ENCODE measurements at regions of chr1 and their contacts with region 1.

Region 1: GRCh38 chr1:45011837-45012638 is at the start of gene UROD:
- DNase-seq: peak; percentile 87 to 95 (median 91)
- H3K4me3 ChIP-seq: peak within 1 kb of the TSS; percentile 86 to 98
- H3K4me3 Mint-ChIP-seq: peak within 1 kb of the TSS; percentile 88 to 98 (median 96)
- H3K27ac ChIP-seq: peak within 1 kb of the TSS; percentile 71
- H3K27ac Mint-ChIP-seq: peak within 1 kb of the TSS; percentile 91 to 99 (median 96)
- H3K4me1 ChIP-seq: peaks cover 40% of the 10 kb centered on the region
- H3K4me1 Mint-ChIP-seq: peaks cover 29 to 60% (median 48%) of the 10 kb centered on the region in 4 donors
- H3K27me3 ChIP-seq: no peaks in the 10 kb centered on the region
- H3K27me3 Mint-ChIP-seq: no peaks in the 10 kb centered on the region
- total RNA-seq, gene UROD: 46.0 to 52.0 TPM

Region 2: GRCh38 chr1:44714944-44715571 is 297.0 kb before region 1 on chr1:
- CTCF ChIA-PET with region 1: interaction called, 5 read pairs
- POLR2A ChIA-PET with region 1: no interaction called
- intact Hi-C with region 1: loop called (anchors 5 kb)
- DNase-seq: peak; percentile 70 to 75 (median 74)
- H3K4me3 ChIP-seq: no peak overlapping the region
- H3K4me3 Mint-ChIP-seq: peak overlapping the region in 7 of 8 donors; percentile 1 to 84 (median 62)
- H3K27ac ChIP-seq: no peak overlapping the region
- H3K27ac Mint-ChIP-seq: peak overlapping the region; percentile 8 to 88 (median 77)
- H3K4me1 ChIP-seq: peaks cover 26% of the 10 kb centered on the region
- H3K4me1 Mint-ChIP-seq: peaks cover 28 to 47% (median 39%) of the 10 kb centered on the region in 4 donors
- H3K27me3 ChIP-seq: no peaks in the 10 kb centered on the region
- H3K27me3 Mint-ChIP-seq: no peaks in the 10 kb centered on the region

Region 3: DNA sequence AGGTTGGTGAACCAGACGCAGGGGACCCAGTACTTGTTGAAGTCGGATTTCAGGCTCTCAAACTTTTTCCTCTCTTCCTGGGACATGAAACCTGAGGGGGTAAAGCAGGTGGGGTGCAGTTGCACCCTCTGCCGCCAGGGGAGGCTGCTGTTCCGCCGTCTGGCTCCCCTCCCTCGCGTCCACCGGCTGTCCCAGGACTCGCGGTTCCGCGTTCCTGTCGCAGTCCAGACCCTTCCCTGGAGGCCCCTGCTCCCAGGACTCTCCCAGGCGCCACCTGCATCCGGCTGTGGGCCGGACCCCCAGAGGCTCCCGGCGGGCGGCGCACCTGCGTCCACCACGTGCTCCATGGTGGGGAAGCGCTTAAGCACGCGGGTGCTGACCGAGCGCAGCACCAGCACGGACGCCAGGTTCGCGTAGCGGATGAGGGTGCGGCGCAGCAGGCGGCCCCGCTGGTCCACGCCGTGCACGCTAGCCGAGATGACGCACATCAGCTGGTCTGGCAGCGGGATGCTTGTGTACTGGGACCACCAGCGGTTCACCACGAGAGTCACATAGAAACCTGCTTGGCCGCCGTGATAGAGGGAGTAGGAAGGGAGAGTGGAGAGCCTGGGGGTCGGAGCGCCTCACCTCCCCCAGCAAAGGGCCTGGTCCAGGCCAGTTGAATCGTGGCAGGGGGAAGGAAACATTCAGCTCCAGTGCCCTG is 225.7 kb before region 1 on chr1:
- CTCF ChIA-PET with region 1: interaction called, 32 read pairs
- POLR2A ChIA-PET with region 1: interaction called, 26 read pairs
- intact Hi-C with region 1: no loop called
- DNase-seq: peak; percentile 72 to 84 (median 80)
- H3K4me3 ChIP-seq: peak overlapping the region; percentile 52 to 68
- H3K4me3 Mint-ChIP-seq: peak overlapping the region; percentile 73 to 83 (median 80)
- H3K27ac ChIP-seq: peak overlapping the region; percentile 53
- H3K27ac Mint-ChIP-seq: peak overlapping the region; percentile 41 to 95 (median 88)
- H3K4me1 ChIP-seq: peaks cover 39% of the 10 kb centered on the region
- H3K4me1 Mint-ChIP-seq: peaks cover 22 to 37% (median 28%) of the 10 kb centered on the region in 4 donors
- H3K27me3 ChIP-seq: no peaks in the 10 kb centered on the region
- H3K27me3 Mint-ChIP-seq: no peaks in the 10 kb centered on the region

Region 4: DNA sequence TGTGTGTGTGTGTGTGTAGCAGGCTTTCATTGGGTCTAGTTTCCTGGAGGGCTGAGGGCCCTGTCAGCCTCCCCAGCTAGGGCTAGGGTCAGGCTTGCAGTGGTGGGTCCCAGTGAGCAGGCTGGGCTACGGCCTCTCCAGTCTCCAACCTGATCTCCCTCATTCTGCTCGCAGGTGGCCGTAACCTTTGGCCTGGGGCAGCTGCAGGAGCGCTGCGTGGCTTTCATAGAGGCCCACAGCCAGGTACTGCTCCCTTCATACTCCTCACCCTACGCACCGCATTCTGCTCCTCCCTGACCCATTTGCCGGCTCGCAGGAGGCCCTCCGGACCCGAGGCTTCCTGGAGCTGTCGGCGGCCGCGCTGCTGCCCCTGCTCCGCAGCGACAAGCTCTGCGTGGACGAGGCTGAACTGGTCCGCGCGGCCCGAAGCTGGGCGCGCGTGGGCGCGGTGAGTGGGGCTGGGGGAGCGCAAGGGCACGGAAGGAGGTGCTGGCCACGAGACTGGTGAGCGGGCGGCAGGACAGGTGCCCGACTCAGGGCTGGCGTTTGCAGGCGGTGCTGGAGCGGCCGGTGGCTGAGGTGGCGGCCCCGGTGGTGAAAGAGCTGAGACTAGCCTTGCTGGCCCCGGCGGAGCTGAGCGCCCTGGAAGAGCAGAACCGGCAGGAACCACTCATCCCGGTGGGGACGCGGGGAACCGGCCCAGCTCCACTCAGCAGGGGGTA is 199.1 kb before region 1 on chr1:
- CTCF ChIA-PET with region 1: interaction called, 4 read pairs
- POLR2A ChIA-PET with region 1: interaction called, 36 read pairs
- intact Hi-C with region 1: no loop called
- DNase-seq: no peak
- H3K4me3 ChIP-seq: peak overlapping the region in 1 of 2 donors; percentile 54
- H3K4me3 Mint-ChIP-seq: peak overlapping the region; percentile 21 to 93 (median 64)
- H3K27ac ChIP-seq: peak overlapping the region; percentile 64
- H3K27ac Mint-ChIP-seq: peak overlapping the region; percentile 82 to 100 (median 99)
- H3K4me1 ChIP-seq: peaks cover 68% of the 10 kb centered on the region
- H3K4me1 Mint-ChIP-seq: peaks cover 43 to 80% (median 62%) of the 10 kb centered on the region in 4 donors
- H3K27me3 ChIP-seq: no peaks in the 10 kb centered on the region
- H3K27me3 Mint-ChIP-seq: no peaks in the 10 kb centered on the region

Region 5: GRCh38 chr1:45051005-45051772 is 39.2 kb after region 1 on chr1:
- CTCF ChIA-PET with region 1: interaction called, 12 read pairs
- POLR2A ChIA-PET with region 1: interaction called, 10 read pairs
- intact Hi-C with region 1: no loop called
- DNase-seq: peak in 4 of 5 donors; percentile 15 to 39 (median 23)
- H3K4me3 ChIP-seq: peak overlapping the region; percentile 11 to 37
- H3K4me3 Mint-ChIP-seq: peak overlapping the region; percentile 76 to 86 (median 81)
- H3K27ac ChIP-seq: peak overlapping the region; percentile 40
- H3K27ac Mint-ChIP-seq: peak overlapping the region; percentile 64 to 92 (median 90)
- H3K4me1 ChIP-seq: peaks cover 16% of the 10 kb centered on the region
- H3K4me1 Mint-ChIP-seq: peaks cover 11 to 19% (median 13%) of the 10 kb centered on the region in 4 donors
- H3K27me3 ChIP-seq: no peaks in the 10 kb centered on the region
- H3K27me3 Mint-ChIP-seq: no peaks in the 10 kb centered on the region

Region 6: GRCh38 chr1:45339789-45340570 is 327.9 kb after region 1 on chr1 and contains the starts of genes MUTYH and TOE1:
- CTCF ChIA-PET with region 1: interaction called, 12 read pairs
- POLR2A ChIA-PET with region 1: interaction called, 76 read pairs
- intact Hi-C with region 1: loop called (anchors 1 kb)
- DNase-seq: peak; percentile 89 to 92 (median 90)
- H3K4me3 ChIP-seq: peak within 1 kb of the TSS; percentile 84 to 91
- H3K4me3 Mint-ChIP-seq: peak within 1 kb of the TSS; percentile 98 to 100 (median 100)
- H3K27ac ChIP-seq: peak within 1 kb of the TSS; percentile 93
- H3K27ac Mint-ChIP-seq: peak within 1 kb of the TSS; percentile 96 to 100 (median 99)
- H3K4me1 ChIP-seq: peaks cover 46% of the 10 kb centered on the region
- H3K4me1 Mint-ChIP-seq: peaks cover 31 to 75% (median 51%) of the 10 kb centered on the region in 4 donors
- H3K27me3 ChIP-seq: no peaks in the 10 kb centered on the region
- H3K27me3 Mint-ChIP-seq: no peaks in the 10 kb centered on the region
- total RNA-seq, gene MUTYH: 70.0 to 72.1 TPM
- total RNA-seq, gene TOE1: 18.2 to 18.9 TPM

Region 7: DNA sequence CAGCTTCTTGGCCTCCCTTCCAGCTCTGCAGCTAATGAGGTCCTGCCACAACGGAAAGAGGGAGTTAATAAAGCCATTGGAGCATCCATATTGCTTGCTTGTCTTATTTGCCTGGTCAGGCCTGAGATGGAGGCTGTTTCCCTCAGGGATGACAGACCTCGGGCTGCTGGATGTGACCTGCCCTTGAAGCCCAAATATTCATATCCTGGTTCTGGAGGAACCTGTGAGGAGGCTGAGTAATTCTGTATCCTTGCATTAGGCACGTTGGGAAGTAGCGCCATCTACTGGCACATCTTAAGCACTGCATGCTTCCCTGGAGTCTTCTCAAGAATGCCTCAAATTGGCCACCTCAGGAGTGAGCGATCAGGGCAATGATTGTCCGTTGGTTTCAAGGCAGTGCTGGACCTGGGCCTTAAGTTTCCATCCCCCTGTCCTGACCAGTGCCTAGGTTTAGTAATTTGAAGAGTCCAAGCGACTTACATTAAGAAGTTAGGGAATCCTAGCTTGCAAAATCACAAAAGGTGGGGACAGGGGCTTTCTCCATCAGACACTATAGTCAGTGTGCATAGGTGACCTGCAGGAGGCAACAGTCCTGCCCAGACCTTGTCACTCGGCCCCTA is 558.0 kb after region 1 on chr1:
- CTCF ChIA-PET with region 1: interaction called, 7 read pairs
- POLR2A ChIA-PET with region 1: interaction called, 3 read pairs
- intact Hi-C with region 1: loop called (anchors 1 kb)
- DNase-seq: peak; percentile 67 to 73 (median 72)
- H3K4me3 ChIP-seq: no peak overlapping the region
- H3K4me3 Mint-ChIP-seq: no peak overlapping the region
- H3K27ac ChIP-seq: no peak overlapping the region
- H3K27ac Mint-ChIP-seq: peak overlapping the region in 6 of 7 donors; percentile 28 to 88 (median 54)
- H3K4me1 ChIP-seq: no peaks in the 10 kb centered on the region
- H3K4me1 Mint-ChIP-seq: peaks cover 0 to 3% (median 0%) of the 10 kb centered on the region in 4 donors
- H3K27me3 ChIP-seq: no peaks in the 10 kb centered on the region
- H3K27me3 Mint-ChIP-seq: no peaks in the 10 kb centered on the region

Measured in CD4-positive, alpha-beta memory T cell (primary cell).